Activated CD4-positive, alpha-beta memory T cell treated with anti-CD3 and anti-CD28 coated beads for 36 hours (primary cell): ENCODE measurements at regions of chr14 and their contacts with region 1.

Region 1: DNA sequence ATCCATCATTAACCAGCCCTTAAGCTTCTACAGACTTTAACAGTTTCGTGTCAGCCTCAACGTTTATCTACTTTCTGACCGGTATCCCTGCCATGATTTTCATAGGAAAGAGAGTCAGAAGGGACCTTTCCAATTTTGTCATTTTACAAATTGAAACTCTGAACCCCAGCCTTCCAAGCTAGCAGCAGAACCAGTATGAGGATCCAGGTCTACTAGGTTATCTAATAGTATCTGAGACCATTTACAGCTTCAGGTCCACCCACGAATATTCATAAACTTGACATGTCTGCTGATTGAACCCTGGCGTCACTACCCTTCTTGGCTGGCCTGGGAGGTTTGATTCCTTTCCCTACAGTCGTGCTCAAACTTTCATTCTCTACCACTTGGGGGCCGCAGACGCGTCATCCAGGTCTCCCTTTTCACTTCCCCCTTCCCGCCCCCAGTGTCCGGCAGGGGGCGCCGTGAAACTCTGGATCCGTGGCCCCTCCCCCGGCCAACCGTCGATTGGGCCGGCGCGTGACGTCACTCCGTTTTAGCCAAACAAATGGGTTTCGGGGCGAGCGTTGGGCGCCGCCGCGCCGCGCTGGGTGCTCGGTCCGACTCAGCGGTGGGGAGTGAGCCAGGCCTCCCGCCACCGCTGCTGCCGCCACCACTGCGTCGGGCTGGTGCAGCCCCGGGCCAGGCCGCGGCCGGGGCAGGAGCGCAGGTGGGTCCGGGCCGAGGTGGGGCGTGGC is at the start of gene FBXO34:
- DNase-seq: peak; percentile 99
- H3K4me3 Mint-ChIP-seq: peak within 1 kb of the TSS; percentile 87
- H3K27ac Mint-ChIP-seq: peak within 1 kb of the TSS; percentile 90
- H3K4me1 Mint-ChIP-seq: peaks cover 39% of the 10 kb centered on the region
- H3K27me3 Mint-ChIP-seq: peaks cover 2% of the 10 kb centered on the region
- total RNA-seq, gene FBXO34: 19.8 to 22.0 TPM

Region 2: GRCh38 chr14:55026793-55027561 is 244.0 kb before region 1 on chr14 and contains the starts of genes SOCS4 and WDHD1:
- CTCF ChIA-PET with region 1: no interaction called
- POLR2A ChIA-PET with region 1: no interaction called
- intact Hi-C with region 1: no loop called
- DNase-seq: peak; percentile 98
- H3K4me3 Mint-ChIP-seq: peak within 1 kb of the TSS; percentile 93
- H3K27ac Mint-ChIP-seq: peak within 1 kb of the TSS; percentile 89
- H3K4me1 Mint-ChIP-seq: peaks cover 44% of the 10 kb centered on the region
- H3K27me3 Mint-ChIP-seq: no peaks in the 10 kb centered on the region
- total RNA-seq, gene SOCS4: 24.4 to 25.3 TPM
- total RNA-seq, gene WDHD1: 62.4 to 63.2 TPM

Region 3: DNA sequence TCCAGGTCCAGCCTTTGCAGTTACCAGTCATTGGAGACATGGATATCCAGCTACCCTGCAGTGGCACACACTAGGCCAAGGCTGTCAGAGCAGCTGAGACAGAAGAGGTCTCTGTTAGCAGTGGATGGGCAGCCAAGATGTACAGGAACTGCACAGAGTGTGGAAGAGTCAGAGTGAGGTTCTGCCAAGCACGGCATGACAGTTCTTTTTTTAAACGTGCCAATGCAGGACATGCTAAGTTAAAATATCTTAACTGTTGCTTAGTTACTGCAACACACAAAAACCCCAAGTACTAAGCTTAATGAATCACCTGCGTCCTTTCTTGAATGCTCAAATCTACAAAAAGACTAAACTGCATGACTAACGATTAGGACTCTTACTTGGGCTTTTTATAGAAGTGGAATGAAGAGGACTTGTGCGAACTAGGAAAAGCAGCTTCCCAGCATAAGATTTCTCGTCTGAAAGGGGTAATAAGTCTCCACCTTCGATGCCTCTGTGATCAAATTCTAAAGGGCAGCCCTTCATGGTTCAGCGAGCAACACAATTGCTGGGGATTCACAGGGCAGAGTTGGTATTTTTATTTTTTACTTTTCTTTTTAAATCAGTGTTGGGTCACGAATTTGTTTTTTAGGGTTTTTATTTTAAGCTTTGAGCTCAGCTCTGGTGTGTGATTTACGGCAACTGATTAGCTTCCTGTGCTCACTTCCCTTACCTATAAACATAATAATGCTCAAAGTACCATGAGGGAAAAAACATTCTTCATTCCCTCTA is 198.9 kb before region 1 on chr14:
- CTCF ChIA-PET with region 1: no interaction called
- POLR2A ChIA-PET with region 1: no interaction called
- intact Hi-C with region 1: loop called (anchors 10 kb)
- DNase-seq: peak; percentile 60
- H3K4me3 Mint-ChIP-seq: peak overlapping the region; percentile 20
- H3K27ac Mint-ChIP-seq: peak overlapping the region; percentile 76
- H3K4me1 Mint-ChIP-seq: peaks cover 40% of the 10 kb centered on the region
- H3K27me3 Mint-ChIP-seq: no peaks in the 10 kb centered on the region

Region 4: DNA sequence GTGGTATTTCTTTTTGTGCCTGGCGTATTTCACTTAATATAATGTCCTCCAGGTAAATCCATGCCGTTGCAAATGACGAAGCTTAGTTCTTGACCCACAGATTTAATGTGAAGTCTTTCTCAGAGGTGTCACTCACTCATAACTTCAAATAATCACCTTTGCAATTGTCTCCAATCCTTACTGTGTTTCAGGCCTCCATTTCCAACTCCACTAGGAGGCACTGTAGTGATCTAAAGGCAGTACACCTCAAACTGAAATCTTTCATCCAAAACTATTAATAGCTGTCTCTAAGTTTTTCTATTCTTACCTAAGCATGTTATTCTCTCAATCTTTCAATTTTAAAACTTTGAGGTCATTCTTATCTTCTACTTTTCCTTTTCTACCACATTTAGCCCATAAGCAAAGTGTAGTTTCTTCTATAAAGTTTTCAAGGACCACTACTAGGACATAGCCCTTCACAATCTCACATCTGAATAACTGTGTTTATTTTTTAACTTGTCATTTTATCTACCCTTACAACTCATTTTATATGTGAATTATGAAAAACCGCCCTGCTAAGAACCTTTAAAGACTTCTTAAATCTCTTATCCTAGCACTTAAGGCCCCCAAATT is 25.2 kb before region 1 on chr14:
- CTCF ChIA-PET with region 1: interaction called, 20 read pairs
- POLR2A ChIA-PET with region 1: no interaction called
- intact Hi-C with region 1: no loop called
- DNase-seq: no peak
- H3K4me3 Mint-ChIP-seq: no peak overlapping the region
- H3K27ac Mint-ChIP-seq: no peak overlapping the region
- H3K4me1 Mint-ChIP-seq: no peaks in the 10 kb centered on the region
- H3K27me3 Mint-ChIP-seq: no peaks in the 10 kb centered on the region

Region 5: GRCh38 chr14:55333711-55334485 is 62.9 kb after region 1 on chr14:
- CTCF ChIA-PET with region 1: interaction called, 22 read pairs
- POLR2A ChIA-PET with region 1: interaction called, 8 read pairs
- intact Hi-C with region 1: loop called (anchors 1 kb)
- DNase-seq: peak; percentile 20
- H3K4me3 Mint-ChIP-seq: peak overlapping the region; percentile 9
- H3K27ac Mint-ChIP-seq: peak overlapping the region; percentile 57
- H3K4me1 Mint-ChIP-seq: peaks cover 85% of the 10 kb centered on the region
- H3K27me3 Mint-ChIP-seq: no peaks in the 10 kb centered on the region

Region 6: DNA sequence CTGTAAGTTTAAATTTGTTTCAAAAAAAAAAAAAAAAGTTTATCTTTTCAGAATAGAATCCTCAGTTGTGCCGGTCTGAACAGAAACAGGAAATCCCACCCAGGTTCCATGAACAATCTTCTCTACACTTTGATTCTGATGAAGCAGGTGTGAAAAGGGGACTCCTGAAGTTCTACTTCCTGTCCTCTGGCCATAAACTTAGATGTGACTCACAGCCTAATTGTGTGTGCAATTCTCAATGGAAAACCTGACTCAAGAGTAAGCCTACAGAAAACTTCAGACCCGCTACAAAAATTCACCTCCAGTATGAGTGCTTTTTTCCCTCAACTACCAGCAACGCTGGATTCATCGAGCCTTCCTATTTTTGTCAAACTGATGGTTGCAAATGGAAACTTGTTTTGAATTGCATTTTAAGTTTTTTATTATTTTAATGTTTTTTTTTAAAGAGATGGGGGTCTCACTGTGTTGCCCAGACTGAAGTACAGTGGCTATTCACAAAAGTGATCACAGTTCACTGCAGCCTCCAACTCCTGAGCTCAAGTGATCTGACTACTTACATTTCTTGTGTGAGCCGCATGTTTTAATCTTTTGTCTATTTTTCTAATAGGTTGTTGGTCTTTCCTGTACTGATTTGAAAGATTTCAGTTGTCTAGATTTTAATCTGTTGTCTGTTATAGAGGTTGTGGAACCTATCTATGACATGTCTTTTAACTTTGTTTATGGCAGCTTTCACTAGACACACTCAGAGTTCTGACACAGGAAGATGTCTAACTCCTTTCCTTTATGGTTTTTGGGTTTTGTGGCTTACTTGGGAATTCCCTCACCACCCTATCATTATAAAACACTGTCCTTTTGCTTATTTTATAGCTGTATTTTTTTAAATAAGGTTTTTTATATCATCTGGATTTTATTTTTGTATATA is 103.0 kb after region 1 on chr14:
- CTCF ChIA-PET with region 1: interaction called, 11 read pairs
- POLR2A ChIA-PET with region 1: no interaction called
- intact Hi-C with region 1: no loop called
- DNase-seq: peak; percentile 45
- H3K4me3 Mint-ChIP-seq: peak overlapping the region; percentile 49
- H3K27ac Mint-ChIP-seq: peak overlapping the region; percentile 91
- H3K4me1 Mint-ChIP-seq: peaks cover 45% of the 10 kb centered on the region
- H3K27me3 Mint-ChIP-seq: no peaks in the 10 kb centered on the region

Region 7: DNA sequence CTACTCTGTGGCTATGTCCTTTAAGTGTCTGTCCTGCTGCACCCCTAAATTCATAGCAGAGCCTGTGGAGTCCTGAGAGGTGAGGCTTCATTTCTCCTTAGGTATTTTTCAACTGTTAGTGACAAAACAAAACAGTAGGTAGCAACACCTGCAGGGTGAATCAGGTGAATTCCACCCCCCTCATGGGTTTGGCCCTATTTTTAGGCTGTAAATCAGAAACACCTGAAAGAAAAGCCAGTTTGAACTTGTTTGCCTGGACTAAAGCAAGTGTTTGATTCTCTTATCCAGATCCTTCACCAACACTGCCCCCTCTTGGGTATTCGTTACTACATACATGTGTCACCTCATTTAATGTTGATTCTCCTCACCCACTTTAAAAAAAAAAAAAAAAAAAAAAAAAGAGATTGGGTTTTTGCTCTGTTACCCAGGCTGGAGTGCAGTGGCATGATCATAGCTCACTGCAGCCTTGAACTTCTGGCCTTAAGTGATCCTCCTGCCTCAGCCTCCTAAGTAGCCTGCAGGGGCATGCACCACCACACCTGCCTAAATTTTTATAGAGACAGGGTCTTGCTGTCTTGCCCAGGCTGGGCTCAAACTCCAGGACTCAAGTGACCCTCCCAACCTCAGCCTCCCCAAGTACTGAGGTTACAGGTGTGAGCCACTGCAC is 159.2 kb after region 1 on chr14:
- CTCF ChIA-PET with region 1: interaction called, 14 read pairs
- POLR2A ChIA-PET with region 1: no interaction called
- intact Hi-C with region 1: loop called (anchors 1 kb)
- DNase-seq: peak; percentile 24
- H3K4me3 Mint-ChIP-seq: no peak overlapping the region
- H3K27ac Mint-ChIP-seq: peak overlapping the region; percentile 20
- H3K4me1 Mint-ChIP-seq: peaks cover 28% of the 10 kb centered on the region
- H3K27me3 Mint-ChIP-seq: no peaks in the 10 kb centered on the region